ENCODE measurements at regions of chr3 and their contacts with region 1.

Region 1: GRCh38 chr3:138875754-138876664 is 41.3 kb upstream of the PIK3CB start:
- DNase-seq: peak; percentile 91 to 98 (median 93)
- ATAC-seq: peak; percentile 94
- H3K4me3 ChIP-seq: peak overlapping the region; percentile 10
- H3K27ac ChIP-seq: peak overlapping the region; percentile 98
- H3K4me1 ChIP-seq: peaks cover 5 to 29% of the 10 kb centered on the region in 2 experiments; a peak in 3 of 5 replicates
- H3K27me3 ChIP-seq: no peaks in the 10 kb centered on the region
- CTCF ChIP-seq: no peak
- EP300 ChIP-seq: peak; percentile 99
- POLR2A ChIP-seq: peak; percentile 76
- RAD21 ChIP-seq: peak; percentile 33 to 40; a peak in 3 of 4 replicates

Region 2: GRCh38 chr3:138898301-138898700 is 22.3 kb after region 1 on chr3:
- CTCF ChIA-PET with region 1: no interaction called
- POLR2A ChIA-PET with region 1: interaction called, 12 read pairs
- in situ Hi-C with region 1: no loop called
- intact Hi-C with region 1: no loop called
- DNase-seq: peak in 1 of 4 experiments; percentile 33
- ATAC-seq: peak; percentile 43
- H3K4me3 ChIP-seq: no peak overlapping the region
- H3K27ac ChIP-seq: peak overlapping the region; percentile 37; the same call in 2 of the 3 replicates
- H3K4me1 ChIP-seq: peaks cover 10 to 16% of the 10 kb centered on the region in 2 experiments; a peak in 3 of 5 replicates
- H3K27me3 ChIP-seq: no peaks in the 10 kb centered on the region
- CTCF ChIP-seq: no peak
- EP300 ChIP-seq: no peak
- POLR2A ChIP-seq: no peak
- RAD21 ChIP-seq: no peak

Region 3: GRCh38 chr3:138974462-138974861 is 98.5 kb after region 1 on chr3:
- CTCF ChIA-PET with region 1: no interaction called
- POLR2A ChIA-PET with region 1: no interaction called
- in situ Hi-C with region 1: no loop called
- intact Hi-C with region 1: no loop called
- DNase-seq: no peak
- ATAC-seq: no peak
- H3K4me3 ChIP-seq: no peak overlapping the region
- H3K27ac ChIP-seq: no peak overlapping the region
- H3K4me1 ChIP-seq: no peaks in the 10 kb centered on the region; a peak in 1 of 5 replicates
- H3K27me3 ChIP-seq: peaks cover 0 to 5% of the 10 kb centered on the region in 2 experiments; a peak in 1 of 5 replicates
- CTCF ChIP-seq: no peak
- EP300 ChIP-seq: no peak
- POLR2A ChIP-seq: no peak
- RAD21 ChIP-seq: no peak

Measured in K562 (cell line).